ENCODE measurements at regions of chr13 and their contacts with region 1.

Region 1: DNA sequence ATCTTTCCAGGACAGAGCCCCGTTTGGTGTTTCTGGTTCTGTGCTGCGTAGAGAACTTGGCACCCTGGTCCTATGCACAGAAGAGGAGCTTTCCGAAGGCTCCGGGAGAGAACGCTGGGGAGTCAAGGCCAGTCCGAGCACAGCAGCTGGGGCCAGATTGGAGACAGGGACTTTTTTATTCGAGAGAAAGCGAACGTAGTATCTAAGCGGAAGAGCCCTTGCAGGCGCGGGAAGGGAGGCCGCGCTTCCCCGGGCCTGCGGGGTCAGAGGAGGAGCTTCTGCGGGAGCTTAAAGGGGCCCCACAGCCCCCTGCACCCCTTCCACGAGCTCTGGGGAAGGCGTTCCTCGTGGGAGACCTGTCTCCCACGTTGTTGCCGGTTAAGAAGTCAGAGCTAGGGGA is 48.6 kb upstream of the ARHGEF7 start:
- DNase-seq: no peak
- ATAC-seq: peak; percentile 29 to 62 (median 54)
- H3K4me3 ChIP-seq: peak overlapping the region in 7 of 10 donors; percentile 63 to 74 (median 66)
- H3K27ac ChIP-seq: peak overlapping the region in 7 of 10 donors; percentile 45 to 68 (median 61)
- H3K4me1 ChIP-seq: peaks cover 0 to 15% (median 7%) of the 10 kb centered on the region in 9 donors
- H3K27me3 ChIP-seq: peaks cover 0 to 36% (median 0%) of the 10 kb centered on the region in 7 donors
- CTCF ChIP-seq: no peak

Region 2: GRCh38 chr13:111153279-111153976 is 86.9 kb after region 1 on chr13:
- intact Hi-C with region 1: loop called in 2 of 10 experiments (anchors 5 kb)
- DNase-seq: peak; percentile 94 to 95
- ATAC-seq: peak; percentile 97 to 99 (median 98)
- H3K4me3 ChIP-seq: peak overlapping the region; percentile 72 to 95 (median 89)
- H3K27ac ChIP-seq: peak overlapping the region; percentile 89 to 99 (median 96)
- H3K4me1 ChIP-seq: peaks cover 10 to 68% (median 31%) of the 10 kb centered on the region in 9 donors
- H3K27me3 ChIP-seq: peaks cover 0 to 4% (median 0%) of the 10 kb centered on the region in 7 donors
- CTCF ChIP-seq: peak in 5 of 9 donors; percentile 26 to 67 (median 49)

Region 3: DNA sequence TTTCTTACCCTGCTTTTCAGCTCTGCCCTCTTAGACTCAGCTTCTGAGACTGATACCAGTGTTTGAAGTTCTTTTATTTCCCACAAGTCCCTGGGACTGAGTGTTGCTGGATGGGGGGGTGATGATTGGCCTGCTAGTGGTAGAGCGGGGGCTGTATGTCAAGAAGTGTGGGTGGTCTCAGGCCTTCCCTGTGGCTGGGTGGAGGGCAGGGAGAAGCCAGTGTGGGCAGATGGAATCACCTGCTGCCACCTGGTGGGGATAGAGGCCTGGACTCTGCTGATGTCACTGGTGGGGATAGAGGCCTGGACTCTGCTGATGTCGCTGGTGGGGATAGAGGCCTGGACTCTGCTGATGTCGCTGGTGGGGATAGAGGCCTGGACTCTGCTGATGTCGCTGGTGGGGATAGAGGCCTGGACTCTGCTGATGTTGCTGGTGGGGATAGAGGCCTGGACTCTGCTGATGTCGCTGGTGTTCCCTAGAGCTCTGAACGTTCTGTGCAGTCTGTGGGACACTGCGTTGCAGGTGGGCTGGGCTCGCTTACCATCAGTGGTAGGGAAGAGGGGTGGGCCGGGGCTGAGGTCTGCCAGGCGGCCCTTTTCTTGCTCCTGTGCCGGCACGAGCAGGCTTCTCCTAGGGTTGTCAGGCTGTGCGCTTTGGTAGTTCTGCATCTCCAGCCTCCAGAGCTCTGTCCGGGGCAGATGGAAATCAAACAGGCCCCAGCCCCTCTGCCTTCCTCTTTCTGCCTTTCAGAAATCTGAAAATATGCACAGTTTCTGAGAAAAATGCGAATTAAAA is 149.8 kb after region 1 on chr13:
- intact Hi-C with region 1: loop called in 6 of 10 experiments (anchors 2 to 5 kb)
- DNase-seq: peak in 1 of 2 donors; percentile 43
- ATAC-seq: peak; percentile 41 to 63 (median 52)
- H3K4me3 ChIP-seq: no peak overlapping the region
- H3K27ac ChIP-seq: peak overlapping the region in 5 of 10 donors; percentile 10 to 51 (median 23)
- H3K4me1 ChIP-seq: peaks cover 9 to 95% (median 78%) of the 10 kb centered on the region in 9 donors
- H3K27me3 ChIP-seq: no peaks in the 10 kb centered on the region
- CTCF ChIP-seq: peak in 8 of 9 donors; percentile 16 to 62 (median 50)

Region 4: DNA sequence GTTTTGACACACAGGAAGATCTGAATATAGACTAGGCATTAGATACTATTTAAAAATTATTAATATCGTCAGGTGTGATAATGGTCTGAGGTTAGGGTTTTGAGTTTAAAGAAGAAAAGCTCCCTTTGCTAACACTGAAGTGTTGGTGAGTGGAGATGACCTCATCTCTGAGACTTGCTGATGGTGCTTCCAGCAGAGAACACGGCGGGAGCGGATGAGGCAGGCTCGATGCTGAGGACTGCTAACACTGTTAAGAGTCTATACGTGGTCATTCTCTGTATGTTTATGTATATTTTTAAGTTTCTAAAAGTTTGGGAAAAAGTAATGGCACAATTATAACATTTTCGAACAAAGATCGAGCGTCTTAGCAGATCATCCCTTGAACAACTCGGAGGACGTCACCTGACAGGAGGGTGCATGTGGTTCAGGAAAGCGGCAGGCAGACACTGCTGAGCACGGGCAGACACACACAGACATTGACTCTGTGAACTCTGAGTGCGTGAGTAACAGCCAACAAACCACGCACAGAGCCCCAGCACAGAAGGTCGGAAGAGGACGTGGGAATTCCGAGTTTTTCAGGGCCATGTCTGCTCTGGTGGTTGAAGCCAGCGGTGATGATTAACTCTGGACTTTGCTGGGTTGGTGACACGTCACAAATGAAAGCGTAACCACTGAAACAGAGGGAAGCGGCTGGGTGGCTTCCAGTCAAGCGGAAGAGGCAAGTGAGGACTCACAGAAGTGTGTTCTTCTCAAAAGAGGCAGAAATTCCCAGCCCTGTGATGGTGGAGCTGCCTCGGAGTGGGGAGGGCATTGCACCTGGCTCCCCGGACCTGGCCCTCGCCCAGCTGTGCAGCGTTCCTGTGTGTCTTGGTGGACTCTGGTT is 162.0 kb after region 1 on chr13:
- intact Hi-C with region 1: loop called in 4 of 10 experiments (anchors 1 to 2 kb)
- DNase-seq: no peak
- ATAC-seq: peak in 1 of 8 donors; percentile 19
- H3K4me3 ChIP-seq: no peak overlapping the region
- H3K27ac ChIP-seq: no peak overlapping the region
- H3K4me1 ChIP-seq: peaks cover 0 to 93% (median 47%) of the 10 kb centered on the region in 9 donors
- H3K27me3 ChIP-seq: no peaks in the 10 kb centered on the region
- CTCF ChIP-seq: no peak

Region 5: DNA sequence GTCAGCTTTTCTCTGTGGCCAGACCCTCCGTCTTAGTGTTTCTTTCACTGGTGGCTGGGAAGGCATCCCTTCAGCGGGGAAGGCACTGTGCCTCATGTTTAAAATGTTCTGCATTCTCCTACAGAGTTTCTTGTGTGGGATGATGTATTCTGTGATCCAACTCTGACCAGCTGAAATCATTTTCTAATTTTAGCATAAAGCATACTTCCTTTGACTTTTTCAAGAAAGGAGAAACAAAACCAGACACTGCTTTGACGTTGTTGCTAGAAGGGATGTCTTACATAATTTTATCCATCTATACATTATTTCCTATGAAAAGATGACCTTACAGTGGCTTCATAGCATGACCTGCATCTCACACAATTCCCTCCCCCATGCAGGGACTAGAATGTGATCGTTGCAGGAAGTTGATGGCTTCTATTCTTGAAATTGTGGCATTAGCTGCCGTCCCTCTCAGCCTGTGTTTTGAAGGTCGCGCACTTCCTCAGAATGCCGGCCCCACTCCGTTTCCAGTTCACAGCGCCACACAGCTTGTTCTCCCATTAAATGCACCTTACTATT is 215.3 kb after region 1 on chr13:
- intact Hi-C with region 1: loop called in 1 of 10 experiments (anchors 2 kb)
- DNase-seq: peak in 1 of 2 donors; percentile 47
- ATAC-seq: peak in 7 of 8 donors; percentile 13 to 74 (median 63)
- H3K4me3 ChIP-seq: no peak overlapping the region
- H3K27ac ChIP-seq: peak overlapping the region; percentile 63 to 94 (median 77)
- H3K4me1 ChIP-seq: peaks cover 15 to 65% (median 51%) of the 10 kb centered on the region in 9 donors
- H3K27me3 ChIP-seq: no peaks in the 10 kb centered on the region
- CTCF ChIP-seq: peak in 2 of 9 donors; percentile 21 to 31

Region 6: DNA sequence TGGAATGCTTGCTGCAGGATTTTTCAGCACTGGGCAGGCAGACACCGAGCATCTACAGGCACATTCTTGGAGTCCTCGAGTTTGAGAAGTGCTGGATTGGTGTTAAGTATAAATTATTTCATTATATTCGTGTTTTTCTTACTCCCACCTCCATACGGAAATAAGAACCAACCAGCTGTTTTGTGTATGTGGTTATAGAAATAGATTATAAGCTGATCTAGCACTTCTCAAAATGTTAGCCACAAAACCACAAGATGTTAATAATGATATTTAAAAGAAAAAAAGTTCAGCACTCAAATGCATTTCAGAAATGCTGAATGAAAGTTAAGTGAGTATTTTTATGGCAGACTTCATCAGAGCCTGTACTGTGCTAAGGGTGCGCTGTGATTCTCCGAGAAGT is 229.9 kb after region 1 on chr13:
- intact Hi-C with region 1: loop called in 1 of 10 experiments (anchors 10 kb)
- DNase-seq: no peak
- ATAC-seq: no peak
- H3K4me3 ChIP-seq: no peak overlapping the region
- H3K27ac ChIP-seq: no peak overlapping the region
- H3K4me1 ChIP-seq: peaks cover 0 to 5% (median 0%) of the 10 kb centered on the region in 9 donors
- H3K27me3 ChIP-seq: no peaks in the 10 kb centered on the region
- CTCF ChIP-seq: no peak

Region 7: GRCh38 chr13:111460548-111461444 is 394.3 kb after region 1 on chr13:
- intact Hi-C with region 1: loop called in 1 of 10 experiments (anchors 10 kb)
- DNase-seq: peak in 1 of 2 donors; percentile 31
- ATAC-seq: peak; percentile 55 to 83 (median 75)
- H3K4me3 ChIP-seq: no peak overlapping the region
- H3K27ac ChIP-seq: no peak overlapping the region
- H3K4me1 ChIP-seq: no peaks in the 10 kb centered on the region
- H3K27me3 ChIP-seq: peaks cover 0 to 70% (median 37%) of the 10 kb centered on the region in 7 donors
- CTCF ChIP-seq: peak in 8 of 9 donors; percentile 21 to 60 (median 48)